ENCODE measurements at regions of chr9 and their contacts with region 1.

Region 1: DNA sequence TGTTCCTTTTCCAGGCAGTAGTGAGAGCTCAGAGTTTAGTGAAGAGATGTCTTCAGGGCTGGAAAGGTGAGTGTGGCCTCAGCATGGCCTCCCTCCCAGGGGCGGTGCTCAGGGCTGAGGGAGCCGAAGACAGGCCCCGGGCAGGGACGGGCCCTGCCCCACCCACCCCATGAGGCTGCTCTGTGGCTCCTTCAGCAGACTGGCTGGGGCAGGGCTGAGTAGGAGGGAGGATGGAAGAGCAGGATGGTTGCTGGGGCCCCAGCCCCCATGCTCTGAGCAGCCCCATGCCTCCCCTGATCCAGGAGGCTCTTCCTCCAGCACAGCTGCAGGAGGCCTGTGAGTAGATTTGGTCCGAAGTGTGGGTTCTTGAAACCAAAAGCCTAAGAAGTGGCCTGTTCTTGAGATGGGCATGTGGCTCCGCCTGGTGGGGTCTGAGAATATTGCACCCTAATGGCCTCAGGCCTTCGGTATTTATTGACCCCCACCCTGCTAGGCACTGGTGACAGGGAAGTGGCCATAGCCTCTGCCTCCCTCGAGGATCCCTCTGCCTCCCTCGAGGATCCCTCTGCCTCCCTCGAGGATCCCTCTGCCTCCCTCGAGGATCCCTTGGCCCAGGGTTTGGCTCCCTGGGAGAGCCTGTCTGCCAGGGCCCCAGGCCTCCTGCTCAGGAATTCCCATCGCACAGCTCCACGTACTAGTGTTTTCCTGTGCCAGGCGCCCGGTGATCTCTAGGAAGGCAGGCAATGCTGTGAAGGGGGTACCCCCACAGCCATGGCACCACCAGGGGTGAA is 65.4 kb upstream of the GARNL3 start:
- DNase-seq: peak; percentile 84
- H3K4me3 ChIP-seq: no peak overlapping the region
- H3K27ac ChIP-seq: no peak overlapping the region
- H3K4me1 ChIP-seq: no peaks in the 10 kb centered on the region
- H3K27me3 ChIP-seq: no peaks in the 10 kb centered on the region
- CTCF ChIP-seq: peak; percentile 89

Region 2: GRCh38 chr9:126860077-126860756 is 339.0 kb before region 1 on chr9 and contains the start of gene ZBTB34:
- intact Hi-C with region 1: loop called (anchors 10 kb)
- DNase-seq: peak; percentile 75
- H3K4me3 ChIP-seq: peak within 1 kb of the TSS; percentile 90
- H3K27ac ChIP-seq: peak within 1 kb of the TSS; percentile 91
- H3K4me1 ChIP-seq: peaks cover 16% of the 10 kb centered on the region
- H3K27me3 ChIP-seq: no peaks in the 10 kb centered on the region
- CTCF ChIP-seq: peak; percentile 100
- total RNA-seq, gene ZBTB34: 4.6 to 10.3 TPM

Region 3: DNA sequence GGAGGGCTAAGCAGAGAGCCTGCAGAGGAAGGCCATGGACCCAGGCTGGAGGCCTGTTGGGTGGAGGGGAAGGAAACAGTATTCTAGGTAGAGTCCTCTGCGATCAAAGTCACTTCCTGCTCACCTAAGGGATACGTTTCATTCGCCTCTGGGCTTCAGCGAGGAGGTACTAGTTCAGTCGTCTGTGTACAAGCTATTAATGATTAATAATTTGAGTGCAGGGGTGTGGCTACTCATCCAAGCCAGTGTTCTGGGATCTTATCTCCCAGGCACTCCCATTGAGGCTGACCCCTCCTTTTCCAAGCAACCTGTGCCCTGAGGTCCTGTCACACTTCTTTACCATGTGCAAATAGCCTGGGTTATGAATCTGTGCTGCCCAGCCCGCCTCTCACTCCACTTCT is 259.4 kb before region 1 on chr9:
- intact Hi-C with region 1: loop called (anchors 1 kb)
- DNase-seq: no peak
- H3K4me3 ChIP-seq: no peak overlapping the region
- H3K27ac ChIP-seq: no peak overlapping the region
- H3K4me1 ChIP-seq: no peaks in the 10 kb centered on the region
- H3K27me3 ChIP-seq: no peaks in the 10 kb centered on the region
- CTCF ChIP-seq: no peak

Region 4: GRCh38 chr9:126962336-126962735 is 236.9 kb before region 1 on chr9:
- intact Hi-C with region 1: loop called (anchors 5 kb)
- DNase-seq: no peak
- H3K4me3 ChIP-seq: no peak overlapping the region
- H3K27ac ChIP-seq: no peak overlapping the region
- H3K4me1 ChIP-seq: no peaks in the 10 kb centered on the region
- H3K27me3 ChIP-seq: no peaks in the 10 kb centered on the region
- CTCF ChIP-seq: no peak

Measured in colonic mucosa (tissue), 4 donors.